ENCODE measurements at regions of chr2 and their contacts with region 1.

Region 1: GRCh38 chr2:74876081-74876886 is 42.4 kb downstream of the HK2 start:
- DNase-seq: peak; percentile 28 to 39 (median 34)
- ATAC-seq: peak; percentile 71
- H3K4me3 ChIP-seq: no peak overlapping the region
- H3K27ac ChIP-seq: no peak overlapping the region
- H3K4me1 ChIP-seq: no peaks in the 10 kb centered on the region
- H3K27me3 ChIP-seq: no peaks in the 10 kb centered on the region
- CTCF ChIP-seq: peak; percentile 52 to 89 (median 74)
- POLR2A ChIP-seq: no peak

Region 2: DNA sequence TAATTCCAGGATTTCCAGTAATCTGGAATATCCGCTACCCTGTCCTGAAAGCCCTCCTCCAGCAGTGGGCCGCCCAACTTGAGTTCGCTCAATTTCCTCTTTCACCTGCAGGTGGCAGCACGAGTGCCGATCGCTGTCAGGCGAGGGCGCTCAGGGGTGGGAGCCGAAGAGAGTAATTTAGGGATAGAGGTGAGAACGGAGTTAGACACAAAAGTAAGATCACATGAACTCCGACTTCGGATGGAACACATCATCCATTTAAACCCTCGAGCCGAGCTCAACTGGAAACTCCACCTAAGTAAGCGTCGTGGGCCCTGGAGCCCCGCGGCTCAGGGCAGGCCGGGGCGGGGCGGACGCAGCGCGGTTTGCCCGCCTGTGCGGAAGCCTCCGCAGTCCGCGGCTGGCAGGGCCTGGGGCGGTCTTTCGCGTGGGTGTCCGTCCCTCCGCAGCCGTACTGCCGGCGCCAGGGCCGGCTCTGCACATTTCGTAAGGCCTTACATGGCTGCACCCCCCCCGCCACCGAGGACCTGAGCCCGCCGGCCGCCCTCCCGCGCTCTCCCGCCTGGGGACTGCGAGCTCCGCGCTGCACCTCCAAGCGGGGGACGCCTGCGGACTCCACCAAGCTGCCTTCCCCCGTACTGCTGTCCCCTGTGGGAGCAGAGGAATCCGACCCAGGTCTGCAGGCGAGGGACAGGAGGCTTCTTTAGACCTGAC is 161.0 kb before region 1 on chr2:
- intact Hi-C with region 1: loop called (anchors 2 kb)
- DNase-seq: peak; percentile 71 to 82 (median 78)
- ATAC-seq: peak; percentile 91
- H3K4me3 ChIP-seq: peak overlapping the region in 1 of 2 donors; percentile 25
- H3K27ac ChIP-seq: peak overlapping the region in 1 of 4 donors; percentile 1
- H3K4me1 ChIP-seq: peaks cover 4% of the 10 kb centered on the region
- H3K27me3 ChIP-seq: no peaks in the 10 kb centered on the region
- CTCF ChIP-seq: peak; percentile 66 to 90 (median 85)
- POLR2A ChIP-seq: no peak

Region 3: DNA sequence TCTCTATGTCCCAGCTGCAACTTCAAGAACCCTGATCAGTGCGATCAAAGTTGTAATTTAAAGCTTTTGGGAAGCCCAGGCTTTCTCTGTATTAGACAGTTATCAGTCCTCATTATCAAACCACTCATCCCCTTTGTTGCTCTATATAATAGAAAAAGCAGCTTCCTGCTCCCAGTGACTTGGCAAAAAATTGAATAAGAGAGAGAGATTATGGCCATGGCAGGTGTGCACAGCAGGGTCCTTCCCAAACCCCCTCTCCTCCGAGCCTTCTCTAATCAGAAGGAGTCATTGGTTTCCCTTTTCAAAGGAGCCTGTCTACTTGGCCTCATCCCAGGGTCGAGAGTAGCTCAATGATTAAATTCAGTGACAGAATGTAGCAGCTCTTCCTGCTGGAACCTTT is 140.7 kb before region 1 on chr2:
- intact Hi-C with region 1: no loop called
- DNase-seq: peak in 1 of 4 donors; percentile 10
- ATAC-seq: no peak
- H3K4me3 ChIP-seq: no peak overlapping the region
- H3K27ac ChIP-seq: no peak overlapping the region
- H3K4me1 ChIP-seq: no peaks in the 10 kb centered on the region
- H3K27me3 ChIP-seq: no peaks in the 10 kb centered on the region
- CTCF ChIP-seq: no peak
- POLR2A ChIP-seq: no peak